ENCODE measurements at regions of chr16 and their contacts with region 1.

Region 1: GRCh38 chr16:68085259-68086071 is at the start of gene NFATC3:
- DNase-seq: peak; percentile 94
- H3K4me3 Mint-ChIP-seq: peak within 1 kb of the TSS; percentile 80
- H3K27ac Mint-ChIP-seq: peak within 1 kb of the TSS; percentile 35
- H3K4me1 Mint-ChIP-seq: peaks cover 23% of the 10 kb centered on the region
- H3K27me3 Mint-ChIP-seq: no peaks in the 10 kb centered on the region
- CTCF ChIP-seq: no peak
- total RNA-seq, gene NFATC3: 18.5 and 24.1 TPM in 2 replicates

Region 2: DNA sequence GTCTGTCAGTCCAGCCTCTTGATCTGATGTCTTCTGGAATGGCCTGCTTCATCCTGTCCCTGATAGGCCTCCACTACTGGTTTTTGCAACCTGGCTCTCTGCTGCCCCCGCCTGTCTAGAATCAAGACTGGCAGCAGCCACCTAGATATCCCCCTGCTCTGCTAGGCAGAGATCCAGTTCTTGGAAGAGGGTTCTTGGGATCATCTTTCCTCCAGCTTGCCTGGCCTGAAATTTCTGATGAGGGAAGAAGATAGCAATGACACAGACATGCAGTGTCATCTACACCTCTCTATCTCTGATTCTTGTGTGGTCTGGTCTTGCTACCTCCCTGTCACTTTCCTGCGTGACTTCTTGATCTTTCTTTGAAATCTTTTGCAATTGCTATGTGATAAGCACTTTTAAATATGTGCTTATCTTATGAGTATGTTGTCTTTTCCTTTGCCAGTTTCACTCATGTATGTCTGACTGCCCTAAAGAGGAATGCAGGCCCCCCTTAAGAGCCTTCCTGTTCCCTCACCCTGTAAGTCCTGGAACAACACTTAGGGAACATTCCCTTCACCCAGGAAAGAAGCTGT is 20.6 kb before region 1 on chr16:
- CTCF ChIA-PET with region 1: interaction called, 8 read pairs
- POLR2A ChIA-PET with region 1: interaction called, 104 read pairs
- intact Hi-C with region 1: no loop called
- DNase-seq: peak; percentile 67
- H3K4me3 Mint-ChIP-seq: no peak overlapping the region
- H3K27ac Mint-ChIP-seq: no peak overlapping the region
- H3K4me1 Mint-ChIP-seq: peaks cover 11% of the 10 kb centered on the region
- H3K27me3 Mint-ChIP-seq: no peaks in the 10 kb centered on the region
- CTCF ChIP-seq: peak; percentile 62

Region 3: GRCh38 chr16:68074850-68075555 is 10.5 kb before region 1 on chr16:
- CTCF ChIA-PET with region 1: interaction called, 12 read pairs
- POLR2A ChIA-PET with region 1: interaction called, 104 read pairs
- intact Hi-C with region 1: no loop called
- DNase-seq: no peak
- H3K4me3 Mint-ChIP-seq: no peak overlapping the region
- H3K27ac Mint-ChIP-seq: no peak overlapping the region
- H3K4me1 Mint-ChIP-seq: peaks cover 5% of the 10 kb centered on the region
- H3K27me3 Mint-ChIP-seq: no peaks in the 10 kb centered on the region
- CTCF ChIP-seq: no peak

Region 4: DNA sequence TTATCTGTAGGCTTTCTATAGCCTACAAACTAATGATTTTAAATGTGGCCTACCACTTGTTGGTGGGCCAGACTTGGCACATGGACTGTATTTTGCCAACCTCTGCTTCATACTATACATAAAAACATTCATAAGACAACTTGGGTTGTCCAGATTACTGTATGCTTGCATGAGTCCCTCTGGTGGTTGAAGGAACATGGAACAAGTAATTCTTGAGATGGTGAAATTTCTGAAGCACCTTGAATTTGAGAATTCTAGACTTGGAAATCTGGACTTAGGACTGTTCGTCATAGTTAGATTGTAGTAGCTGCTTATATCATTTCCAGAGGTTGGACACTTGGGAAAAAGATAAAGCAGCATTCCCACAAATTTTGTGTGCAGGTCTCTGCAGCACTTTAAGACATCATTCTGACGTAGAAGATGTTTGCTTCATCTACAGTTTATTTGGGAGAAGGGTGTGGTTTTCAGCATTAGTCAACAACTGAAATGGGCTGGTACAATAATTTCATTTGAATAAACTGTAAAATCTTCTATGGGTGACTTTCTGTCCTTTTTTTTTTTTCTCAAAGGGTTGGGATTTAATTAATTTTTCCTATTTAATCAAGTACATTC is 30.9 kb after region 1 on chr16:
- CTCF ChIA-PET with region 1: interaction called, 3 read pairs
- POLR2A ChIA-PET with region 1: interaction called, 44 read pairs
- intact Hi-C with region 1: no loop called
- DNase-seq: peak; percentile 53
- H3K4me3 Mint-ChIP-seq: no peak overlapping the region
- H3K27ac Mint-ChIP-seq: no peak overlapping the region
- H3K4me1 Mint-ChIP-seq: peaks cover 18% of the 10 kb centered on the region
- H3K27me3 Mint-ChIP-seq: no peaks in the 10 kb centered on the region
- CTCF ChIP-seq: peak; percentile 53

Region 5: GRCh38 chr16:68146585-68146984 is 61.1 kb after region 1 on chr16:
- CTCF ChIA-PET with region 1: interaction called, 3 read pairs
- POLR2A ChIA-PET with region 1: interaction called, 11 read pairs
- intact Hi-C with region 1: no loop called
- DNase-seq: no peak
- H3K4me3 Mint-ChIP-seq: no peak overlapping the region
- H3K27ac Mint-ChIP-seq: no peak overlapping the region
- H3K4me1 Mint-ChIP-seq: peaks cover 5% of the 10 kb centered on the region
- H3K27me3 Mint-ChIP-seq: no peaks in the 10 kb centered on the region
- CTCF ChIP-seq: no peak